CD4-positive, alpha-beta T cell (primary cell): ENCODE measurements at regions of chr14 and their contacts with region 1.

Region 1: GRCh38 chr14:89954070-89955028 is at the start of gene EFCAB11:
- DNase-seq: peak; percentile 88 to 99 (median 92)
- ATAC-seq: peak; percentile 81
- H3K4me3 ChIP-seq: peak within 1 kb of the TSS; percentile 74
- H3K4me3 Mint-ChIP-seq: peak within 1 kb of the TSS; percentile 88
- H3K27ac ChIP-seq: peak within 1 kb of the TSS in 1 of 2 donors; percentile 40
- H3K27ac Mint-ChIP-seq: peak within 1 kb of the TSS; percentile 99
- H3K4me1 ChIP-seq: peaks cover 38% of the 10 kb centered on the region
- H3K4me1 Mint-ChIP-seq: peaks cover 39% of the 10 kb centered on the region
- H3K27me3 ChIP-seq: no peaks in the 10 kb centered on the region
- H3K27me3 Mint-ChIP-seq: no peaks in the 10 kb centered on the region
- CTCF ChIP-seq: no peak
- total RNA-seq, gene EFCAB11: 0.36 to 0.47 TPM

Region 2: DNA sequence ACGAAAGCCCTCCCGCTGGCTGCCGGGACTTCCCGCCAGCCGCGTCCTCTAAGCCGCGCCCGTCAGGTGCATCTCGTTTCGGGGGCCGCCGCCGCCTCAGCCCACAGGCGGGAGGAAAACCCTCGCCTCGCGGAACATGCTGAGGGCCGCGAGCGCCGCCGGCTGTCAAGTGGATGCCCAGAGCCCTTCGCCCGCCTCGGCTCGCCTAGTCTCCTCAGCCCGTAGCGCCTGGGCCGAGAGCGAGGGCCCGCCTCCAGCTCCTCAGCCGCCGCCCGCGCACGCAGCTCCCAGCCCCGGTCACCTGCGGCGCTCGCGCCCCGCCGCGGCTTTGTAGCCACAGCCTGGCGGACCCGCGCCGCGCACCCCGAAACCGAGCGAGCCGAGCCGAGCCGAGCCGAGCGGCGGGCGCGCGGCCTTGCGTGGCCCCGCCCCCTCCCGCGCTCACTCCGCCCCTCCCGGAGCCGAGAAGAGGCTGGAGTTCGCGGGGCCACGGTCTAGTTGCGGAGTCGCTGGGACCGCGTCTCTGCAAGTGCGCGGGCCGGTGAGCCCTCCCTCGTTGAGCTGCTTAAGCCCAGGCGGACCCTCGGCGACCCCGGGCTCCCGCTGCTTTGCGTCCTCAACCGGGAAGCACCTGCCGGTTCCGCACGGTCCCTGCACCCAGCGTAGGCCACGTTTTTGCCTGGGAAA is 1161.6 kb before region 1 on chr14 and contains the start of gene EML5:
- CTCF ChIA-PET with region 1: no interaction called
- POLR2A ChIA-PET with region 1: no interaction called
- intact Hi-C with region 1: loop called in 1 of 2 experiments (anchors 2 kb)
- DNase-seq: peak; percentile 64 to 93 (median 80)
- ATAC-seq: peak; percentile 87
- H3K4me3 ChIP-seq: peak within 1 kb of the TSS; percentile 89
- H3K4me3 Mint-ChIP-seq: peak within 1 kb of the TSS; percentile 95
- H3K27ac ChIP-seq: peak within 1 kb of the TSS in 1 of 2 donors; percentile 61
- H3K27ac Mint-ChIP-seq: peak within 1 kb of the TSS; percentile 85
- H3K4me1 ChIP-seq: peaks cover 16% of the 10 kb centered on the region
- H3K4me1 Mint-ChIP-seq: peaks cover 20% of the 10 kb centered on the region
- H3K27me3 ChIP-seq: peaks cover 0 to 3% of the 10 kb centered on the region in 2 experiments
- H3K27me3 Mint-ChIP-seq: no peaks in the 10 kb centered on the region
- CTCF ChIP-seq: peak; percentile 24
- total RNA-seq, gene EML5: 2.8 to 3.1 TPM

Region 3: DNA sequence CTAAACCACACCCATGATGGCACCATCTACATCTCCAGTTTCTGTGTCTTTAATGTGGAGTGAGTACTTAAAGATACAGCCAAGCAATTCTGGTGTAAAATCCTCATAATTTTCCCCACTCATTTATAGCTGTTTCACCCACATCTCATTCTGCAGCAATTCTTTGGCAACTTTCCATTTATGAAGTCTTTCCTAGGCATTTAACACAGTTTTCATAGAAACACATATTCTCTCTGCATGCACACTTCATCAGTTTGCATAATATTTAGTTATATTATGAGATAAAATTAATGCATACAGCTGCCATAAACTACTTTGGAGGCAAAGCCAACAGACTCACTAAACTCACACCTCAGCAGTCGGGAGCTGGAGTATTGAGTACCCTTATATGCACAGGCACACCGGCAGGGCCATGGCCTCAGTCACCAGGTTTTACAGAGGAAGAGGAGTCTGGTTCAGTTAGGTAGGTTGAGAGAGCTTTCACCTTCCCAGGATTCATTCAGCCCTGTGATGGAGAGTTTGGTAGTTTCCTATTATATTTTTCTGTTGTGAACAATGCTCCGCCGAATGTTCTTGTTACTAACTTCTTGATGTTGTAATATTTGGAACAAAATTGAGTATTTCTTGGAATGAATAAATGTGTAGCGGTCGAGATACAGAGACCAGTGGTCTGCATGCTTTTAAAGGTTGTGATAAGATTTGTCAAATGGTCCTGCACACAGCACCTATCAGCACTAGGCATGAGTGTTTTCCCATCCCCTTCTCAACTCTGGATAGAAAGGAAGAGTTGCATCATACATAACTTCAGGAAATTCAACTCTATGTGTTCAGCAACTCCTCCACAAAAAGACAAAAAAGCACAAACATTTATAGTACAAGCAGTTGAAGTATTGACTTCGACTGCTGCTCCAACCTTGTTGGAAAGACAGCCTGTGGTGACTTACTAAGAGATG is 1006.4 kb before region 1 on chr14:
- CTCF ChIA-PET with region 1: no interaction called
- POLR2A ChIA-PET with region 1: no interaction called
- intact Hi-C with region 1: no loop called
- DNase-seq: no peak
- ATAC-seq: no peak
- H3K4me3 ChIP-seq: no peak overlapping the region
- H3K4me3 Mint-ChIP-seq: no peak overlapping the region
- H3K27ac ChIP-seq: no peak overlapping the region
- H3K27ac Mint-ChIP-seq: no peak overlapping the region
- H3K4me1 ChIP-seq: no peaks in the 10 kb centered on the region
- H3K4me1 Mint-ChIP-seq: no peaks in the 10 kb centered on the region
- H3K27me3 ChIP-seq: peaks cover 5 to 14% of the 10 kb centered on the region in 2 experiments
- H3K27me3 Mint-ChIP-seq: peaks cover 53% of the 10 kb centered on the region
- CTCF ChIP-seq: no peak

Region 4: DNA sequence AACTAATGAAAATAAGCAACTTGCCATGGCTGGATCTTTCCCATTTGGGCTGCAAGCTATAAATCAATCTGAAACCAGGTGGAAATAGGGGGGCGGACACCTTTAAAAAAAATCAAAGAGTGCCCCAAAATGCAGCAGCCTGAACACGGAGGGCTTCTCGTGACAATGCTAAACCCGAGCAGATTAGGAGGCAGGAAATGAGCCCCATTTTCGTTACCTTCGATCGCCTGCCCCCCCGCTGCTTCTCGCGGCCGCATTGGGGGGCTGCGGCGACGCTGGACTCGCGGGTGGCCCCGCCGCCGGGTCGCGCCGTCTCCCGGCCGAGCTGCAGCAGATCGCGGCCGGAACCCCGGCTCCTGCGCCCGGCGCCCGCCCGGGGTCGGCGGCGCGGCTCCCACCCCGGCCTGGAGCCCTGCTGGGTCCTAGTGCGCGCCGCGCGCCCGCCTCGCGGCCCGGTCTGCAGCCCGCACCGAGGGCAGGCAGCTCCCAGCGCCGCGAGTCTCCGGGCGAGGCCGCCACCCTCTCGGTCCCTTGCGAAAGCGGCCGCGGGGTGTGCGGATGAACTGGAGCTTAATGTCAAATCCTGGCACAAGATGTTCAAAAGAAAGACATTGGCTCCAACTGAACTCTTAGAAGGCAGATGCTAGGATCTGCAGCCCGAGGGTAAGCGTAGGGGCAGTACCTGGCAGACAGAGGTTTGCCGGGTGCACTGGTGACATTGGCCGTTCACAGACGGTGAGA is 335.4 kb before region 1 on chr14:
- CTCF ChIA-PET with region 1: no interaction called
- POLR2A ChIA-PET with region 1: interaction called, 3 read pairs
- intact Hi-C with region 1: loop called (anchors 1 to 10 kb)
- DNase-seq: peak; percentile 35 to 84 (median 58)
- ATAC-seq: peak; percentile 42
- H3K4me3 ChIP-seq: peak overlapping the region; percentile 76
- H3K4me3 Mint-ChIP-seq: peak overlapping the region; percentile 96
- H3K27ac ChIP-seq: peak overlapping the region; percentile 62 to 86
- H3K27ac Mint-ChIP-seq: peak overlapping the region; percentile 99
- H3K4me1 ChIP-seq: peaks cover 41% of the 10 kb centered on the region
- H3K4me1 Mint-ChIP-seq: peaks cover 70% of the 10 kb centered on the region
- H3K27me3 ChIP-seq: no peaks in the 10 kb centered on the region
- H3K27me3 Mint-ChIP-seq: no peaks in the 10 kb centered on the region
- CTCF ChIP-seq: no peak

Region 5: DNA sequence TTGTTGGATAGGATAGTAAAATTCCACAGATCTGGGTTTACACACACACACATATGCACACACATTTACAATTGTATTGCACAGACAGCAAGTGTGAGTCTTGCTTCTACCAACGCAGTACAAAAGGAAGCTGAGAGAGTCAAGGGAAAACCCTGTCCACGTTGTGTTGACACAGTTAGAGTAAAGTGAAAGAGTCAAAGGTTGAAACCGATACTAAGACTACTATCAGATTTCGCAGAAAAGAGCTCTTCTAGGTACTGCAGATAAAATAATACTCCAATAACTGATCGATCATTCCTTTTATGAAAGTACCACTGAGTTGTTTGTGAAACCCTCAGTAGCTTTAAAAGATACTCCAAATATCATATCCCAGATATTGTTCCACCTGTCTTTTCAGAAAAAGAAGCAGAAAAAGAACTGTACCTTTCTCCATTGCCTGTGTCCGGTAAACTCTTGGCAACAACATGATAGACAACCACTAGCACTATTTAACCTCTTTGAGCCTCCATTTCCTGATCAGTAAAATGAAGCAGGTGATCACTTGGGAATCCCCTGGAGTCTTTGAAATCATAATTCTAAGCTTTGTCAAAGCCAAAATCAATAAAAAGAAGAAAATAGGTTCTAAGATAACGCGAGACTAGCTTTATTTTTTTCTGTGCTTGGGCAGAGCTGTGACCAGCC is 312.7 kb before region 1 on chr14:
- CTCF ChIA-PET with region 1: no interaction called
- POLR2A ChIA-PET with region 1: no interaction called
- intact Hi-C with region 1: no loop called
- DNase-seq: peak in 4 of 14 experiments; percentile 27 to 73 (median 70)
- ATAC-seq: peak; percentile 83
- H3K4me3 ChIP-seq: peak overlapping the region; percentile 24
- H3K4me3 Mint-ChIP-seq: peak overlapping the region; percentile 72
- H3K27ac ChIP-seq: peak overlapping the region; percentile 25 to 80
- H3K27ac Mint-ChIP-seq: peak overlapping the region; percentile 94
- H3K4me1 ChIP-seq: peaks cover 13% of the 10 kb centered on the region
- H3K4me1 Mint-ChIP-seq: peaks cover 59% of the 10 kb centered on the region
- H3K27me3 ChIP-seq: no peaks in the 10 kb centered on the region
- H3K27me3 Mint-ChIP-seq: no peaks in the 10 kb centered on the region
- CTCF ChIP-seq: no peak

Region 6: DNA sequence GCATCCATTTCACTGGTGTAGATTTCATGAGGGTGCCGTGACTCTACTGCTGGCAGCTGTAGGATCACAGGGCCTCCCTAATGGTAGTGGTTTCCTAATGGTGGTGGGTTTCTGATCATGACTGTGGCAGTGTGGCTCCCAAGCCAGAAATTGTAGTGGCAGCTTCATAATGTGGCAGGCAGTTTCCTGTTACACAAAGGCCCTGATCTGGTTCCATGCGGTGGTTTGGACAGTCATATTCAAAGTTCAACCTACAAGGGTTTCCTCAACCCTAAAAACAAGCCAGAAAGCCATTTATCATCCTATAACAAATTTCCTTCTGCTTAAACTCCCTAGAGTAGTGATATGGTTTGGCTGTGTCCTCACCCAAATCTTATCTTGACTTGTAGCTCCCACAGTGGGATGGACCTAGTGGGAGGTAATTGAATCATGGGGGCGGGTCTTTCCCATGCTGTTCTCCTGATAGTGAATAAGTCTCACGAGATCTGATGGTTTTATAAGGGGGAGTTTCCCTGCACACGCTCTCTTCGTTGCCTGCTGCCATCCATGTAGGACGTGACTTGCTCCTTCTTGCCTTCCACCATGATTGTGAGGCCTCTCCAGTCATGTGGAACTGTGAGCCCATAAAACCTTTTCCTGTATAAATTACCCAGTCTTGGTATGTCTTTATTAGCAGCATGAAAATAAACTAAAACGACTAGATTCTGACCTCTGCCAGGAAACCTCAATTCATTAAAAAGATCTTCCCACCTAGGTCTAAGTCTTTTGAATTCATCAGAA is 256.9 kb before region 1 on chr14:
- CTCF ChIA-PET with region 1: no interaction called
- POLR2A ChIA-PET with region 1: no interaction called
- intact Hi-C with region 1: no loop called
- DNase-seq: no peak
- ATAC-seq: no peak
- H3K4me3 ChIP-seq: no peak overlapping the region
- H3K4me3 Mint-ChIP-seq: no peak overlapping the region
- H3K27ac ChIP-seq: no peak overlapping the region
- H3K27ac Mint-ChIP-seq: no peak overlapping the region
- H3K4me1 ChIP-seq: peaks cover 16% of the 10 kb centered on the region
- H3K4me1 Mint-ChIP-seq: peaks cover 33% of the 10 kb centered on the region
- H3K27me3 ChIP-seq: no peaks in the 10 kb centered on the region
- H3K27me3 Mint-ChIP-seq: no peaks in the 10 kb centered on the region
- CTCF ChIP-seq: no peak

Region 7: GRCh38 chr14:89973234-89973823 is 19.0 kb after region 1 on chr14:
- CTCF ChIA-PET with region 1: interaction called, 17 read pairs
- POLR2A ChIA-PET with region 1: interaction called, 12 read pairs
- intact Hi-C with region 1: no loop called
- DNase-seq: peak in 13 of 14 experiments; percentile 10 to 70 (median 39)
- ATAC-seq: peak; percentile 54
- H3K4me3 ChIP-seq: no peak overlapping the region
- H3K4me3 Mint-ChIP-seq: no peak overlapping the region
- H3K27ac ChIP-seq: no peak overlapping the region
- H3K27ac Mint-ChIP-seq: no peak overlapping the region
- H3K4me1 ChIP-seq: no peaks in the 10 kb centered on the region
- H3K4me1 Mint-ChIP-seq: peaks cover 10% of the 10 kb centered on the region
- H3K27me3 ChIP-seq: no peaks in the 10 kb centered on the region
- H3K27me3 Mint-ChIP-seq: no peaks in the 10 kb centered on the region
- CTCF ChIP-seq: peak; percentile 87

Region 8: GRCh38 chr14:90383075-90383730 is 428.9 kb after region 1 on chr14:
- CTCF ChIA-PET with region 1: no interaction called
- POLR2A ChIA-PET with region 1: interaction called, 16 read pairs
- intact Hi-C with region 1: loop called (anchors 5 to 10 kb)
- DNase-seq: peak; percentile 93 to 99 (median 97)
- ATAC-seq: peak; percentile 74
- H3K4me3 ChIP-seq: peak overlapping the region; percentile 83
- H3K4me3 Mint-ChIP-seq: no peak overlapping the region
- H3K27ac ChIP-seq: peak overlapping the region; percentile 95 to 98
- H3K27ac Mint-ChIP-seq: no peak overlapping the region
- H3K4me1 ChIP-seq: peaks cover 35% of the 10 kb centered on the region
- H3K4me1 Mint-ChIP-seq: peaks cover 23% of the 10 kb centered on the region
- H3K27me3 ChIP-seq: no peaks in the 10 kb centered on the region
- H3K27me3 Mint-ChIP-seq: no peaks in the 10 kb centered on the region
- CTCF ChIP-seq: no peak

Region 9: DNA sequence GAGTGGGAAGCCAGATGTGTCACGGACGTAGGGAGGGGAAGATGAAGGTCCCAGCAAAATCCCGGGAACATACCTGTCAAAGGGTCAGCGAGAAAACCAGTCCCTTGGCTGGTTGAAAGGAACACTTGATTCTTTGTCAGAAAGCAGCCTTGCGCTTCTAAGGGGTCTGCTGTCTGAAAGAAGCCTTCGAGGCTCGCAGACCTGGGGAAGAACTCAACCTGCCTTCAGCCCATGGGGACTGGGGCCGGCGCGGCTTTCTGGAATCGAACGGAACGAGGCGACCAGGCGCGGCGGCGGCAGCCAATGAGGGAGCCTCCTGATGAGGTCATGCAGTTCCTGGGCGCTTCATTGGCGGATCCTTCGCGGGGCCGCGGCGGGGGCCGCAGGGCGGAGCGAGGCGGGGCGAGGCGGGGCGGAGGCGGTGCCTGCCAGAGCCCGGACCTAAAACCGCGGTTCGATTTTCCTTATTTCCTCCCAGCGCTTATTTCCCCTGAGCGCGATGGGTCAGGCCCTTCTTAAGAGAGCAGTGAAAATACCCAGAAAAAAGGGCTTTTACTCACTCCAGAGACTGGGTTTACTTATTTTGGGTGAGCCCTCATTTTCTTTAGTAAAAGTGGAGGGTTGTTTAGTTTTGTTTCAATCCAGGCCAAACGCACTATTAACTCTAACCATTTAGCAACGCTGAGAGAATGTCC is 873.7 kb after region 1 on chr14:
- CTCF ChIA-PET with region 1: no interaction called
- POLR2A ChIA-PET with region 1: no interaction called
- intact Hi-C with region 1: loop called in 1 of 2 experiments (anchors 10 kb)
- DNase-seq: peak; percentile 76 to 95 (median 84)
- ATAC-seq: peak; percentile 99
- H3K4me3 ChIP-seq: peak overlapping the region; percentile 49
- H3K4me3 Mint-ChIP-seq: peak overlapping the region; percentile 67
- H3K27ac ChIP-seq: peak overlapping the region in 1 of 2 donors; percentile 67
- H3K27ac Mint-ChIP-seq: peak overlapping the region; percentile 64
- H3K4me1 ChIP-seq: peaks cover 17% of the 10 kb centered on the region
- H3K4me1 Mint-ChIP-seq: peaks cover 18% of the 10 kb centered on the region
- H3K27me3 ChIP-seq: no peaks in the 10 kb centered on the region
- H3K27me3 Mint-ChIP-seq: no peaks in the 10 kb centered on the region
- CTCF ChIP-seq: no peak